ENCODE measurements at regions of chr1 and their contacts with region 1.

Region 1: DNA sequence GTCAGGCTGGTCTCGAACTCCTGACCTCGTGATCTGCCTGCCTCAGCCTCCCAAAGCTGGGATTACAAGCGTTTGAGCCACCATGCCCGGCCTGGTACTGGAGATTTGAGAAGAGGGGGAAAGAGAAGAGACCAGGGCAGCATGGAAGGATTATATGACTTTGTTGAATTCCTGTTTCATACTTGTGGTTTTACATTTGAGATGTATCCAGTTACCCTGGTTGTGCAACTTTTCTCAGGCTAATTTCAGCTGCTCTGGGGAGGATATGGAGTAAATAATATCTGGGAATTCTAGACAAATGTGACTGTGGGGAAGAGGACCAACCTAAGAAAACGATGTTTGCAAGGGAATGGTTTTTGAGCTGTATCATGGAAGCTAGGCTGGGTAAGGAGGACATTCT is 89.5 kb upstream of the GREM2 start:
- DNase-seq: peak; percentile 74
- H3K4me3 ChIP-seq: no peak overlapping the region
- H3K27me3 ChIP-seq: no peaks in the 10 kb centered on the region
- CTCF ChIP-seq: no peak

Region 2: GRCh38 chr1:240652549-240652948 is 48.9 kb before region 1 on chr1:
- CTCF ChIA-PET with region 1: no interaction called
- POLR2A ChIA-PET with region 1: interaction called, 21 read pairs
- DNase-seq: no peak
- H3K4me3 ChIP-seq: no peak overlapping the region
- H3K27me3 ChIP-seq: no peaks in the 10 kb centered on the region; the same call in 1 of the 2 replicates
- CTCF ChIP-seq: no peak

Region 3: GRCh38 chr1:240683576-240683975 is 17.8 kb before region 1 on chr1:
- CTCF ChIA-PET with region 1: no interaction called
- POLR2A ChIA-PET with region 1: no interaction called
- DNase-seq: no peak
- H3K4me3 ChIP-seq: no peak overlapping the region
- H3K27me3 ChIP-seq: no peaks in the 10 kb centered on the region
- CTCF ChIP-seq: no peak

Measured in BJ (cell line).